IMR-90 (cell line): ENCODE measurements at regions of chr16 and their contacts with region 1.

Region 1: DNA sequence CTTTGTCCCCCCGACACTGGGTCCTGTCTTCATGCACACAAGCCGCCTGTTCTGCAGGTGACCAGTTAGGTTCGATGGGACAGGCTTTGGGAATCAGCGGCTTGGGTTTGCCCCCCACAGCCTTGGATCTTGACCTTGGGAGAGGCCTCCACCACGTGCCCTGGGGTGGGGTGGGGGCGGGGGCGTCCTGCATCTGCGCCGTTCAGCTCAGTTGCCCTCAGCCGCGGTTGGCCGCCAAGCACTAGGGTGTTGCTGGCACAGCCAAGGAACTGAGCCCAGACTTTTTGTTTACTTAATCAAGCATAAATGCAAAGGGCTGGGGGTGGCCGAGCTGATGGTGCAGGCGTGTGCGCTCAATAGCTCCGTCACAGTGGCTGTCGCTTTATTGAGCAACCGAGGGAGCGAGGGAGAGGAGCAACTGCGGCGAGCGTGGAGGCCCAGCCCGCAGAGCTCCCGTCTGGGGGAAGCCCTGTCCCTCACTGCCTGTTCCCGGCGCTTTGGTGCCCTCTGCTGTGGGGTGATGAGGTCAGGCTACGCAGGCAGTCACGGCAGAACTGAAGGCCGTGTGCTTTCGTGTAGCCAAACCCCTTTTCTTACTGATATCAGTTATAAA is 33.9 kb downstream of the JPH3 start:
- DNase-seq: peak; percentile 64
- ATAC-seq: peak; percentile 97
- H3K4me3 ChIP-seq: no peak overlapping the region
- H3K27ac ChIP-seq: no peak overlapping the region
- H3K4me1 ChIP-seq: no peaks in the 10 kb centered on the region
- H3K27me3 ChIP-seq: peaks cover 38% of the 10 kb centered on the region
- CTCF ChIP-seq: peak; percentile 79
- POLR2A ChIP-seq: 0 out of 2 replicates have a peak, but pooled peaks have one; percentile 24
- RAD21 ChIP-seq: peak; percentile 91

Region 2: DNA sequence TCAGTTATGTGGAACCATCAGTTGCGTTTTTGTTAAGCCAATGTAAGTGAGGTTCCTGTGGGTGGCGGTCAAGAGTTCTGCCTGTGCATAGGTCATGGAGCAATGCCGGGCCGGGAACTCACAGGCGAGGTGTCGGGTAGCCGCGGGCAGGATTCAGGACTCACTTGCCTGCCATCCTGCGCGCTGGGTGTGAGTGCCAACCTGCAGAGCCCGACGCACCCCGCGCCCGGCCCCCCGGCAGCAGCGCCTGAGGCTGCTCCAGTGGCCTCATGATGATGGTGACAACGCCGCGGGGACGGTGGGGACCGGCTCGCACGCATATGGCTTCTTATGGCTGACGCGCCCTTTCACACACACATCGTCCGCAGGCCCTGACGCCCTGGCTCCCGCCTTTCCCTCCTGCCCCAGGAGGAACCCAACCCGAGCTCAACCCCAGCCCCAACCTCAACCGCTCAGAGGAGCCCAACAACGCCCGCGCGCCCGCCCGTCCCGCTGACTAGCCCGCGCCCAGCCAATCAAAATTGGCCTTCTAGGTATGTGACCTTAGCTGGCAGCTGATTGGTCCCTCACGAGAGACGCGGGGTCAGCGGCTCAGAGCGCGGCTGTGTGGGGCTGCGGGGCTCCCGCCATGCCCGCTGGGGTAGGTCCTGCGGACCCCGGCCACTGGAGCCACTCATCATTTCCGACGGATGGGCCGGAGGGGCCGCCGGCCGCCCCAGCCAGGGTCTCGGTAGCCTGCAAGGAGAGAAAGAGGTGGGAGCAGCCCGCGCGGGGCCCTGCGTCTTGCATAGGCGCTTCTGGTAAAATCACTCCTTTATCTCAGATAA is 319.0 kb before region 1 on chr16 and contains the start of gene C16orf95:
- CTCF ChIA-PET with region 1: no interaction called
- POLR2A ChIA-PET with region 1: no interaction called
- dilution Hi-C with region 1: no loop called
- in situ Hi-C with region 1: loop called (anchors 10 kb)
- intact Hi-C with region 1: loop called (anchors 10 kb)
- DNase-seq: peak; percentile 93
- ATAC-seq: peak; percentile 95
- H3K4me3 ChIP-seq: peak within 1 kb of the TSS; percentile 84
- H3K27ac ChIP-seq: peak within 1 kb of the TSS; percentile 74
- H3K4me1 ChIP-seq: peaks cover 5% of the 10 kb centered on the region
- H3K27me3 ChIP-seq: no peaks in the 10 kb centered on the region
- CTCF ChIP-seq: peak; percentile 62
- POLR2A ChIP-seq: peak; percentile 52; the same call in 1 of the 2 replicates
- RAD21 ChIP-seq: peak; percentile 45
- total RNA-seq, gene C16orf95: 1.9 and 2.0 TPM in 2 replicates

Region 3: GRCh38 chr16:87391950-87392822 is 244.0 kb before region 1 on chr16 and contains the start of gene MAP1LC3B:
- CTCF ChIA-PET with region 1: interaction called, 7 read pairs
- POLR2A ChIA-PET with region 1: no interaction called
- dilution Hi-C with region 1: no loop called
- in situ Hi-C with region 1: no loop called
- intact Hi-C with region 1: loop called (anchors 1 kb)
- DNase-seq: peak; percentile 94
- ATAC-seq: peak; percentile 83
- H3K4me3 ChIP-seq: peak within 1 kb of the TSS; percentile 75
- H3K27ac ChIP-seq: peak within 1 kb of the TSS; percentile 90
- H3K4me1 ChIP-seq: peaks cover 7% of the 10 kb centered on the region
- H3K27me3 ChIP-seq: no peaks in the 10 kb centered on the region
- CTCF ChIP-seq: no peak
- POLR2A ChIP-seq: peak; percentile 99
- RAD21 ChIP-seq: no peak
- total RNA-seq, gene MAP1LC3B: 23.5 and 25.3 TPM in 2 replicates

Region 4: DNA sequence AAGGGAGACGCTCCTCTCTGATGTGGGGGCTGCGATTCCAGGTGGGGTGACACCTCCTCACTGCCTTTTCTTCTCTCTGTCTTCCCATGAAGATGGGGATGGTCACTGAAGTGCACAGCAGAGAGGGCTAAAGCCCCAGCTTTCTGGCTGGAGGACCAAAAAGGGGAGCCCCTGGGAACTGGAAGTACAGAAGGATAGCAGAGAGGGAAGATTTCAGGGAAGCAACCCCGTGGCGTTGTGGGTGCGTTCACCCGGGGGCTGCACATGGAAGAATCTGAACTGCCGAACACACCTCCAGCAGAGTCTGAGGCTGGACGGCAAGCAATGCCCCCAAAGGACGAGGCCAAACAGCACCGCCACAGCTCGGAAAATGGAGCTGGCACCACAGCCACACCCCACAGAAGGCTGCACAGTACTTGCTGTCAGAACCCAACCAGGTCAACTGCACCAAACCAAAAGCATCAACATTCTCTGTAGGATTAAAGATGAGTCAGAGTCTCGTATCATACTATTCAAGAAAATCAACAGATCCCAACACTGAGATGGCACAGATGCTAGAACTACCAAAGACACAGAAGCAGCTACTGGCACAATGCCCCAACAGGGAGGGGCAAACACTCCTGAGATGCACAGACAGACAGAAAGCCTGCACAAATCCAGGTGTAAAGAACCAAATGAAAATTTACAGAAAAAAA is 194.1 kb before region 1 on chr16:
- CTCF ChIA-PET with region 1: no interaction called
- POLR2A ChIA-PET with region 1: no interaction called
- dilution Hi-C with region 1: no loop called
- in situ Hi-C with region 1: no loop called
- intact Hi-C with region 1: no loop called
- DNase-seq: peak; percentile 70
- ATAC-seq: peak; percentile 81
- H3K4me3 ChIP-seq: no peak overlapping the region
- H3K27ac ChIP-seq: no peak overlapping the region
- H3K4me1 ChIP-seq: peaks cover 16% of the 10 kb centered on the region
- H3K27me3 ChIP-seq: no peaks in the 10 kb centered on the region
- CTCF ChIP-seq: no peak
- POLR2A ChIP-seq: no peak
- RAD21 ChIP-seq: no peak

Region 5: GRCh38 chr16:87550496-87550961 is 85.6 kb before region 1 on chr16:
- CTCF ChIA-PET with region 1: no interaction called
- POLR2A ChIA-PET with region 1: no interaction called
- dilution Hi-C with region 1: no loop called
- in situ Hi-C with region 1: no loop called
- intact Hi-C with region 1: loop called (anchors 2 kb)
- DNase-seq: no peak
- ATAC-seq: peak; percentile 74
- H3K4me3 ChIP-seq: no peak overlapping the region
- H3K27ac ChIP-seq: no peak overlapping the region
- H3K4me1 ChIP-seq: no peaks in the 10 kb centered on the region; the same call in 1 of the 2 replicates
- H3K27me3 ChIP-seq: peaks cover 28% of the 10 kb centered on the region; the same call in 1 of the 2 replicates
- CTCF ChIP-seq: peak; percentile 72
- POLR2A ChIP-seq: no peak
- RAD21 ChIP-seq: peak; percentile 61

Region 6: DNA sequence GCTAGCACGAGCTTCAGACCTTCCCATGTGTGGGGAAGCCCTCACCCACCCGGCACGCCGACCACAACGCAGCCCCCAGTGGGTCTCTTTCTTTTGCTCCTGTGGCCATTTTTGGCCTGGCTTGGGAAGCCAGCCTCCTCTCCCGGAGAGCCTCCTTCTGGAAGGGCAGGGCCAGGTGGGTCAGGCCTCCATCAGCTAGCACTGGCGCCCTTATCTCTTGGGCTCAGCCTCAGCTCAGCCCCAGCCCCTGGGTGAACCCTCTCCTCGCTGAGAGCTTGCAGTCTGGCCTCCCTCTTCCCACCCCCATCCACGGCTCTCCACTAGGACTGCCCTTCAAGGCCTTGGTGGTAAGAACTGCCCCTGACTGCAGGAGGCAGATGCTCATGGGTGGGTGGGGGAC is 48.5 kb before region 1 on chr16:
- CTCF ChIA-PET with region 1: interaction called, 10 read pairs
- POLR2A ChIA-PET with region 1: no interaction called
- dilution Hi-C with region 1: no loop called
- in situ Hi-C with region 1: no loop called
- intact Hi-C with region 1: loop called (anchors 1 kb)
- DNase-seq: no peak
- ATAC-seq: no peak
- H3K4me3 ChIP-seq: no peak overlapping the region
- H3K27ac ChIP-seq: no peak overlapping the region
- H3K4me1 ChIP-seq: peaks cover 15% of the 10 kb centered on the region
- H3K27me3 ChIP-seq: peaks cover 36% of the 10 kb centered on the region
- CTCF ChIP-seq: no peak
- POLR2A ChIP-seq: no peak
- RAD21 ChIP-seq: no peak

Region 7: DNA sequence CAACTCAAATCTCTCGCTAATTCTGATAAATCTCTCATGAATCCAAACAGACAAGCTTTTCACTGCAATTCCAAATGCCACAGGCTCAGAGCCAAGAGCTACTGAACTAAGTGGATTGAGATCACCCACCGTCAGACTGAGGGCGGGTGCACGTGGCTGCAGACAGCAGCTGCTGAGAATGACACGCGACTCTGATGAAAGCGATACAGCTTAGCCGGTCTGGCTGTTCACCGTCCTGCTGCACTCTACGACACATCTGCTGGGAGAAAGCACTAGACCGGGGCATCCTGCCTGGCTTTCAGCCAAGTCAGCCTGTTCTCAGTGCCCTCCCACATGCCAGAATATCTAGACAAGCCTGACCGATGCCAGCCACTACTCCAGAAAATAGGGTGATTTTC is 87.0 kb after region 1 on chr16:
- CTCF ChIA-PET with region 1: no interaction called
- POLR2A ChIA-PET with region 1: no interaction called
- dilution Hi-C with region 1: no loop called
- in situ Hi-C with region 1: no loop called
- intact Hi-C with region 1: no loop called
- DNase-seq: peak; percentile 97
- ATAC-seq: peak; percentile 87
- H3K4me3 ChIP-seq: no peak overlapping the region
- H3K27ac ChIP-seq: no peak overlapping the region
- H3K4me1 ChIP-seq: peaks cover 10% of the 10 kb centered on the region; the same call in 1 of the 2 replicates
- H3K27me3 ChIP-seq: no peaks in the 10 kb centered on the region
- CTCF ChIP-seq: no peak
- POLR2A ChIP-seq: no peak
- RAD21 ChIP-seq: no peak